Activated CD8-positive, alpha-beta memory T cell treated with anti-CD3 and anti-CD28 coated beads, Interleukin-2, amount 10 ng/mL, durations not matched to agents 7 days and 5 days (primary cell): ENCODE measurements at regions of chr15 and their contacts with region 1.

Region 1: GRCh38 chr15:78049691-78050440 is 27.6 kb downstream of the TBC1D2B start:
- DNase-seq: peak; percentile 88
- ATAC-seq: peak; percentile 77
- H3K4me3 Mint-ChIP-seq: peak overlapping the region; percentile 48
- H3K27ac Mint-ChIP-seq: peak overlapping the region; percentile 94
- H3K4me1 Mint-ChIP-seq: peaks cover 96% of the 10 kb centered on the region
- H3K27me3 Mint-ChIP-seq: no peaks in the 10 kb centered on the region

Region 2: DNA sequence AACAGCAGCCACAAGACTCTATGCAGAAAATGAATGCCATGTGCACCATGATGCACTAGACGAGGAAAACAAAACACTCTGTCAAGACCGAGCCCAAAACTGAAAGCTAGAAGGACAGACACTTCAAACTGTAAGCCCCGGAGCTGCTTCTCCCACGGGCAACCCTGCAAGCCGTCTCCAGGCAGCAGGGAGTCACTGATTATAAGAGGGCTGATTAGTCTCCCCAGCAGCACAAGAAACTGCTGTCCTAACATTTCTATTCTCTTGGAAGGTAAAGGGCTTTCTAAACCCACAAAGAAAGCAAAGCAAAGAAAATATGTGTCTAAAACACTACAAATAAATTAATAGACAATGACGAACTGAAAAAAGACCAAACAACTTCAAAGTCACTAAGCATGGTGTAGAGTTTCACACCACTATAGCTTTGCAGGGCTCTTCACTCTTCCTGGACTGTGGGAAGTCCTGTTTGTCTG is 12.1 kb after region 1 on chr15:
- CTCF ChIA-PET with region 1: interaction called, 154 read pairs
- DNase-seq: peak; percentile 71
- ATAC-seq: peak; percentile 79
- H3K4me3 Mint-ChIP-seq: peak overlapping the region; percentile 64
- H3K27ac Mint-ChIP-seq: peak overlapping the region; percentile 91
- H3K4me1 Mint-ChIP-seq: peaks cover 41% of the 10 kb centered on the region
- H3K27me3 Mint-ChIP-seq: no peaks in the 10 kb centered on the region

Region 3: DNA sequence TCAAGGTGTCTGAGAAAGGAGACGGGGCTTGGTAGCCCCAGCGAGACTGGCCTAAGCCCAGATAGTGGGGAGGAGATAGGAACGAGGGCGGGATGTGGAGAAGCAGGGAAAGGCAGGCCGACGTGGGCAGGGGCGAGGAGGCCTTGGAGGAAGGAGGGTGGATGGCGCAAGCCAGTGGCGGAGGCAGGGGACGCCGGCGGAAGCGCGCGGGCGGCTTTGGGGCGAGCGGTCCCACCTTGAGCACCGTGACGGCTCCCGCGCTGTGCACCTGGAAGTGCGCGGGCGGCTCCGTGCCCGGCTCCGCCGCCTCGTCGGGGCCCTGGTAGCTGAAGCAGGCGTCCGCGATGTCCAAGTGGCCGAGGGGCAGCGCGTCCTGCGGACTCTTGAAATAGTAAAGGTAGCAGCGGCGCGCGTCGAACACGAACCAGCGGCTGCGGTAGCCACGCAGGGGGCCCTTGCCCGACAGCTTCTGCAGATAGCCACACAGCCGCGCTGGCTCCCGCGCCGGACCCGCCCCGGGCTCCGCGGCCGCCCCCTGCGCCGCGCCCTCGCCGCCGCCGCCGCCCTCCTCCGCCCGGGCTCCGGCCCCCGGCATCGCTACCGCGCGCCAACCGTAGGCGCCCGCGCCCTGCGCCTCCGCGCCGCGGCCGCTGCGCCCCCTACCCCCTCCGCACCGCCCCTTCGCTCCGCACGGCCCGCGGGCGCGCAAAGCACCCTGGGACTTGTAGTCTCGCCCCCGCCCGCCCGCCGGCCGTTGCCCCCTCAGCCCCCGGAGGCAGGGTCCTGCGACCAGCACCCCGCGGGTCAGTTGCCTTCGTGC is 27.4 kb after region 1 on chr15 and contains the start of gene TBC1D2B:
- CTCF ChIA-PET with region 1: interaction called, 154 read pairs
- DNase-seq: peak; percentile 77
- ATAC-seq: peak; percentile 86
- H3K4me3 Mint-ChIP-seq: peak within 1 kb of the TSS; percentile 100
- H3K27ac Mint-ChIP-seq: peak within 1 kb of the TSS; percentile 94
- H3K4me1 Mint-ChIP-seq: peaks cover 41% of the 10 kb centered on the region
- H3K27me3 Mint-ChIP-seq: no peaks in the 10 kb centered on the region
- total RNA-seq, gene TBC1D2B: 118 to 135 TPM